Gastrocnemius medialis (tissue), 4 donors: ENCODE measurements at regions of chr3 and their contacts with region 1.

Region 1: DNA sequence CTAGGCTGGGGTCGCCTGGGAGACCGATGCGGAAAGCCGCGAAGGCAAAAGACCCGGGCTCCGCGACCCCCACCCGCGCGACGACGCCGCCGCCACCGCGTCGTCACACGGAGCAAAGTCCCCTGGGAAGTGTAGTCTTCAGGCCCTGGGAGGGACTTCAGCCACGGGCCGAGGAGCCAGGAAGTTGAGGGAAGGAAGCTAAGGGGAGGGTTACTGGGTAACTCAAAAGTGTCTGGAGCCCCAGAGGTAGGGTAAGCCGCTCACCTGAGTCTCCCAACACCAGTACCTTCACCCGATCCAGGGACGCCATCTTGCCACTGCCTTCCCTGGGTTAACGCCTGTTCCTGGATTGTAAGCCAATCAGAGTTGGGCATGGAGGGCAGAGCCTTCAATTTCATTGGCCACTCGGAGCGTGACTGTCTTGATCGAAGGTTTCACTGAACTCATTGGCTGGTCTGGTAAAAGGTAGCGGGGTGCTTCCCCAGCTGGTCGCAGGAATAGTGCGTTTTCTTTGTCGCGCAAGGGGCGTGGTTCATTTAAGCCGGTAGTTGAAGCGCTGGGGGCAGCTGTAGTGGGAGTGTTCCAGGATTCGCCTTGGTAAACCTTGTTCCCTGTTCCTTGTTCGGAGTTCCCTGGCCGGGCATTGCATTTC is at the starts of genes GTF2E1 and RABL3:
- DNase-seq: peak; percentile 98 to 99
- ATAC-seq: peak; percentile 99 to 100
- H3K4me3 ChIP-seq: peak within 1 kb of the TSS; percentile 67 to 96 (median 88)
- H3K27ac ChIP-seq: peak within 1 kb of the TSS; percentile 90 to 98 (median 95)
- H3K4me1 ChIP-seq: peaks cover 13 to 17% of the 10 kb centered on the region in 2 donors
- H3K27me3 ChIP-seq: no peaks in the 10 kb centered on the region
- CTCF ChIP-seq: no peak
- POLR2A ChIP-seq: peak; percentile 61 to 66
- total RNA-seq, gene GTF2E1: 7.3 to 23.8 (median 19.3) TPM
- total RNA-seq, gene RABL3: 20.0 to 46.8 (median 30.4) TPM

Region 2: GRCh38 chr3:119463171-119464169 is 1278.9 kb before region 1 on chr3 and contains the start of gene TMEM39A:
- in situ Hi-C with region 1: no loop called
- intact Hi-C with region 1: loop called (anchors 10 kb)
- DNase-seq: peak; percentile 98 to 99
- ATAC-seq: peak; percentile 97 to 98
- H3K4me3 ChIP-seq: peak within 1 kb of the TSS; percentile 88 to 99 (median 94)
- H3K27ac ChIP-seq: peak within 1 kb of the TSS; percentile 80 to 92 (median 83)
- H3K4me1 ChIP-seq: peaks cover 21 to 27% of the 10 kb centered on the region in 2 donors
- H3K27me3 ChIP-seq: no peaks in the 10 kb centered on the region
- CTCF ChIP-seq: peak in 3 of 5 experiments; percentile 23 to 33 (median 32)
- POLR2A ChIP-seq: peak; percentile 80 to 85
- total RNA-seq, gene TMEM39A: 9.0 to 21.2 (median 15.5) TPM

Region 3: DNA sequence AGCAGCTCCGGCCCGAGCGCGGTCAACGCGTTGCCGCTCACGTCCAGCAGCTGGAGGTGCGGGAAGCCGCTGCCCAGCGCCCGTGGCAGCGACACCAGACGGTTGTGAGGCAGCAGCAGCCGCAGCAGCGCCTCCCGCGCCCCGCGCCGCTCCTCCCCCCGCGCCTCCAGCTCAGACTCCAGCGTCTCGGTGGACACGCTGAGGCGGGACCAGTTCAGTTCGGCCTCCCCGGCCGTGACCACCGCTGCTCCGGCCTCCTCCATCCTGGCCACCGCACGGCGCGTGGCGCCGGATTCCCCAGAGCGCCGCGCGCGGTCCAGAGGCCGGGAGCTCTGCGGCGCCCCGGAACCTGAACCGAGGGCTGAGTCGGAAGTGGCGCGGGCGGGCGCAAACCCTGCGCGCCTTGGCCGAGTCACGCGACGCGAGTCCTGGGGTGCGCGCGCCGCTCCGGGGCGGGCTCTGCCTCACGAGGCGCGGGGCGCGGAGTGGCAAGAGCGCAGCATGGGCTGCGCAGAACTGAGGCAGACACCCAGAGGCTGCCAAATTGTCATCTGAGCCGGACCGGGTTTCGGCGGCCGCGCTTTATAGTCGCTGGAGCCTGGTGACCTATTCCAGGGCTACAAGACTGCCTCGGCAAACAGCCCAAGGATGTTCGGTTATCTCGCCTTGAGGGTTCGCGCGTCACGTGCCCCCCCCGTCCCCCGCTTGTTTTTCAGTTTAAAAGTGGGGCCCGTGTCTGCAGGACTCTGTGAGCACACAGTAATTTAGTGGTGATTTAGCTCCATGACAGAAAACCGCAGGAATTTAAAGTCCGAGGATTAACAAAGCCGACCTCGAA is 393.1 kb before region 1 on chr3 and contains the start of gene LRRC58:
- in situ Hi-C with region 1: no loop called
- intact Hi-C with region 1: loop called (anchors 1 kb)
- DNase-seq: peak; percentile 82 to 93
- ATAC-seq: peak; percentile 88 to 93
- H3K4me3 ChIP-seq: peak within 1 kb of the TSS; percentile 77 to 95 (median 85)
- H3K27ac ChIP-seq: peak within 1 kb of the TSS; percentile 88 to 93 (median 90)
- H3K4me1 ChIP-seq: peaks cover 20 to 43% of the 10 kb centered on the region in 2 donors
- H3K27me3 ChIP-seq: no peaks in the 10 kb centered on the region
- CTCF ChIP-seq: peak in 4 of 5 experiments; percentile 14 to 48 (median 28)
- POLR2A ChIP-seq: peak; percentile 92 to 95
- total RNA-seq, gene LRRC58: 8.4 to 15.2 (median 13.6) TPM

Region 4: DNA sequence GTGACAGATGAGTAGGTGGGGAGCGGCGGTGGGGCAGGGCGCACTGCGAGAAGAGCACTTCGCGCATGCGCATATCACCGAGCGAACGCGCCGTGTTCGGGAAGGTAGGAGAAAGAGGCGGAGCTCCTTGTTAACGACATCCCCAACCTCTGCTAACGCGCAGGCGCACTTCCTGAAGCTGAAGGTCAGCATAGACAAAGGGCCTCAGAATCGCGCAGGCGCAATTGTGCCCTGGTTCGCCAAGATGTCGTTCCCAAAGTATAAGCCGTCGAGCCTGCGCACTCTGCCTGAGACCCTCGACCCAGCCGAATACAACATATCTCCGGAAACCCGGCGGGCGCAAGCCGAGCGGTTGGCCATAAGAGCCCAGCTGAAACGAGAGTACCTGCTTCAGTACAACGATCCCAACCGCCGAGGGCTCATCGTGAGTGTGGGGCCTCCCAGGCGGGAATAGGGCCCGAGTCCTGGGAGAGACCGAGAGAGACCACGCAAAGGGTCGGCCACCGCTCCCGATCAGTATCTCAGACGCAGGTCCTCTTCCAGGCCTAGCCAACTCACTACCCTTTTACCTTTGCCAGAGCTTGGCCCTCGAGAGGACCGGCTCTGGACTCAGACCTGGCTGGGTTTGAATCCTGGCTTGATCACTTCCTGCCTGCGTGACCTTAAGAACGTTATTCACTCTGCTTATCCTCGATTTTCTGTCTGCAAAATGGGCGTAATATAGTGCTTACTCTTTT is 146.0 kb before region 1 on chr3 and contains the start of gene NDUFB4:
- in situ Hi-C with region 1: loop called in 3 of 4 experiments (anchors 5 to 10 kb)
- intact Hi-C with region 1: loop called (anchors 5 kb)
- DNase-seq: peak; percentile 95 to 97
- ATAC-seq: peak; percentile 99 to 100
- H3K4me3 ChIP-seq: peak within 1 kb of the TSS; percentile 86 to 99 (median 88)
- H3K27ac ChIP-seq: peak within 1 kb of the TSS; percentile 90 to 96 (median 93)
- H3K4me1 ChIP-seq: peaks cover 36 to 45% of the 10 kb centered on the region in 2 donors
- H3K27me3 ChIP-seq: no peaks in the 10 kb centered on the region
- CTCF ChIP-seq: no peak
- POLR2A ChIP-seq: peak; percentile 71 to 75
- total RNA-seq, gene NDUFB4: 186 to 413 (median 377) TPM

Region 5: GRCh38 chr3:121834696-121835464 is 1092.6 kb after region 1 on chr3 and contains the starts of genes EAF2 and IQCB1:
- in situ Hi-C with region 1: no loop called
- intact Hi-C with region 1: loop called (anchors 2 kb)
- DNase-seq: peak; percentile 92 to 94
- ATAC-seq: peak; percentile 98 to 99
- H3K4me3 ChIP-seq: peak within 1 kb of the TSS; percentile 73 to 96 (median 77)
- H3K27ac ChIP-seq: peak within 1 kb of the TSS; percentile 80 to 91 (median 88)
- H3K4me1 ChIP-seq: peaks cover 13 to 22% of the 10 kb centered on the region in 2 donors
- H3K27me3 ChIP-seq: no peaks in the 10 kb centered on the region
- CTCF ChIP-seq: no peak
- POLR2A ChIP-seq: peak; percentile 79 to 92
- total RNA-seq, gene EAF2: 2.6 to 5.7 (median 3.6) TPM
- total RNA-seq, gene IQCB1: 8.8 to 14.0 (median 11.8) TPM